Head of caudate nucleus (tissue), 42 donors: ENCODE measurements at regions of chr2 and their contacts with region 1.

Region 1: DNA sequence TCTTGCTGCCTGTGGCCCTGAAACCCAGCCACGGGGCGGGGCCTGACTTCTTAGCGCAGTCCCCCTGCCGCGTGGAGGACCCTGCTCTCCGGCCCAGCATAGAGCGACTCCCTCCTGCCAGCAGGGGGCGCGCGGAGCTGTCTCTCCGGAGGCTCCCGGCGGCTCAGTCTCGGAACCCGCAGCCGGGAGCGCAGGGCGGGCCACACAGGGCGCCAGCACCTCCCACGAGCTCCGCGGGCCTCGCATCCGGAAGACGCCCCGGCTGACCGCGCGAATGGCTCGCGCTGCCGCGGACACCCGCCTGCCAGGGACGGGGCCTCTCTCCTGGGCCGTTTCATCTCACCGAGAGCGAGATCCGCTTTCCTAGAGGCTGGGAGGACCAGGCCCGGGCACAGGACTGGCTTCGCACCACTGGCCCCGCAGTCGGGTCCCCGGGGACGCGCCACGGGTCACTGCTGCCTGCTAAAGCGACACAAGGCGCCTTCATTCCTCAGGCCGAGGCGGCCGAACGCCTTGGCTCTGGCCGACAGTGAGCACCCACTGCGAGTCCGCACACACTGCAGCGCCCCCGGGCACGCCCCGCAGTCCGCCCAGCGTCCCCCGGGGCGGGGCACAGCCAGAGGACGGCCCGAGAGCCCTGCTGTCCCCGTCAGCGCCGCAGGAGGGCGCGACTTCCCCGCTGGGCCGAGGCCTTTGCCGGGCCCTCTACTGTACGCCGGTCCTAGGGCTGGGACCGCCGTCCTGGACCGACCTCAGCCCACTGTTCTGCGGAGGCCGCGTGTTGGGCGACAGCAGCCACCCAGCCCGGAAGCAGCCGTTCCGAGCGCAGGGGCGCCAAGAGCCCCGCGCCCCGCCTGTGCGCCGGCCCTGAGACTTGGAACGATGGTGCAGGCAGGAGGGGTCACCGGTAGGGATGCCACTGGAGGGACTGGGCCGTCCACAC is 39.0 kb upstream of the ARHGEF4 start:
- DNase-seq: peak; percentile 77 to 99 (median 95)

Region 2: GRCh38 chr2:130873700-130874346 is 76.1 kb after region 1 on chr2:
- intact Hi-C with region 1: loop called (anchors 2 kb)
- DNase-seq: peak; percentile 65 to 95 (median 88)